ENCODE measurements at regions of chr15 and their contacts with region 1.

Region 1: DNA sequence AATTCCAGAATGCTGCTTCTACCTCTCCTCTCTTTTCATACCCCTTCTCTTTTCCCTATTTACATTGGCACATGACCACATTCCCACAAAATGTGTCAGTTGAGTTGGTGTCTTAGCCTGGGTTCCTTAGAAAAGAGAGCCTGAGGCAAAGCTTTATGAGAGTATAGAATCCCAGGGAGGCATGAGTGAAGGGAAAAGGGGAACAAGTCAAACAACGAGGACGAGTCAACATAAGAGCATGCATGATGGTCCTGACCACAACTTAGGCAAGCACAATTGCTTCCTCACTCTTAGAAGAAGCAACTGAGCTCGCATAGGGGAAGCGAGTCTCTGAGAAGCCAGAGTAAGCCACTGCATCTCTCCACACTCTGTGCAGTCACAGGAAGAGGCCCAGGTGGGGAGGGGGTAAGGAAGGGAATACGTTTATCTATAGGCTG is 15.4 kb upstream of the ZNF774 start:
- DNase-seq: peak in 1 of 10 donors; percentile 29
- H3K4me3 ChIP-seq: no peak overlapping the region
- H3K27ac ChIP-seq: no peak overlapping the region
- H3K27me3 ChIP-seq: no peaks in the 10 kb centered on the region
- CTCF ChIP-seq: no peak

Region 2: GRCh38 chr15:90618330-90619125 is 281.8 kb after region 1 on chr15:
- intact Hi-C with region 1: loop called in 1 of 2 experiments (anchors 10 kb)
- DNase-seq: no peak
- H3K4me3 ChIP-seq: no peak overlapping the region
- H3K27ac ChIP-seq: peak overlapping the region in 52 of 59 donors; percentile 2 to 83 (median 57)
- H3K27me3 ChIP-seq: no peaks in the 10 kb centered on the region
- CTCF ChIP-seq: no peak

Measured in dorsolateral prefrontal cortex (tissue), 120 donors.